MCF 10A (cell line): ENCODE measurements at regions of chr15 and their contacts with region 1.

Region 1: GRCh38 chr15:32844118-32844711 is 126.4 kb downstream of the GREM1 start:
- DNase-seq: peak; percentile 50
- H3K4me3 Mint-ChIP-seq: no peak overlapping the region
- H3K27ac Mint-ChIP-seq: no peak overlapping the region
- H3K4me1 Mint-ChIP-seq: no peaks in the 10 kb centered on the region
- H3K27me3 Mint-ChIP-seq: no peaks in the 10 kb centered on the region
- CTCF ChIP-seq: peak; percentile 61

Region 2: GRCh38 chr15:32664796-32665195 is 179.4 kb before region 1 on chr15:
- CTCF ChIA-PET with region 1: interaction called, 63 read pairs
- POLR2A ChIA-PET with region 1: no interaction called
- intact Hi-C with region 1: loop called (anchors 2 kb)
- DNase-seq: no peak
- H3K4me3 Mint-ChIP-seq: no peak overlapping the region
- H3K27ac Mint-ChIP-seq: no peak overlapping the region
- H3K4me1 Mint-ChIP-seq: peaks cover 9% of the 10 kb centered on the region
- H3K27me3 Mint-ChIP-seq: no peaks in the 10 kb centered on the region
- CTCF ChIP-seq: no peak

Region 3: GRCh38 chr15:32855942-32856341 is 11.7 kb after region 1 on chr15:
- CTCF ChIA-PET with region 1: interaction called, 15 read pairs
- POLR2A ChIA-PET with region 1: no interaction called
- intact Hi-C with region 1: no loop called
- DNase-seq: peak; percentile 86
- H3K4me3 Mint-ChIP-seq: no peak overlapping the region
- H3K27ac Mint-ChIP-seq: no peak overlapping the region
- H3K4me1 Mint-ChIP-seq: peaks cover 27% of the 10 kb centered on the region
- H3K27me3 Mint-ChIP-seq: no peaks in the 10 kb centered on the region
- CTCF ChIP-seq: no peak

Region 4: GRCh38 chr15:32899126-32899596 is 54.9 kb after region 1 on chr15:
- CTCF ChIA-PET with region 1: no interaction called
- POLR2A ChIA-PET with region 1: no interaction called
- intact Hi-C with region 1: no loop called
- DNase-seq: peak; percentile 3
- H3K4me3 Mint-ChIP-seq: no peak overlapping the region
- H3K27ac Mint-ChIP-seq: no peak overlapping the region
- H3K4me1 Mint-ChIP-seq: no peaks in the 10 kb centered on the region
- H3K27me3 Mint-ChIP-seq: no peaks in the 10 kb centered on the region
- CTCF ChIP-seq: no peak

Region 5: GRCh38 chr15:32936283-32936918 is 92.2 kb after region 1 on chr15:
- CTCF ChIA-PET with region 1: interaction called, 74 read pairs
- POLR2A ChIA-PET with region 1: interaction called, 4 read pairs
- intact Hi-C with region 1: loop called (anchors 1 kb)
- DNase-seq: peak; percentile 48
- H3K4me3 Mint-ChIP-seq: no peak overlapping the region
- H3K27ac Mint-ChIP-seq: peak overlapping the region; percentile 7
- H3K4me1 Mint-ChIP-seq: peaks cover 5% of the 10 kb centered on the region
- H3K27me3 Mint-ChIP-seq: peaks cover 11% of the 10 kb centered on the region
- CTCF ChIP-seq: peak; percentile 73

Region 6: GRCh38 chr15:32994810-32995424 is 150.7 kb after region 1 on chr15:
- CTCF ChIA-PET with region 1: interaction called, 20 read pairs
- POLR2A ChIA-PET with region 1: no interaction called
- intact Hi-C with region 1: loop called (anchors 1 kb)
- DNase-seq: peak; percentile 52
- H3K4me3 Mint-ChIP-seq: no peak overlapping the region
- H3K27ac Mint-ChIP-seq: no peak overlapping the region
- H3K4me1 Mint-ChIP-seq: no peaks in the 10 kb centered on the region
- H3K27me3 Mint-ChIP-seq: no peaks in the 10 kb centered on the region
- CTCF ChIP-seq: peak; percentile 47

Region 7: GRCh38 chr15:33188641-33189257 is 344.5 kb after region 1 on chr15:
- CTCF ChIA-PET with region 1: no interaction called
- POLR2A ChIA-PET with region 1: no interaction called
- intact Hi-C with region 1: no loop called
- DNase-seq: no peak
- H3K4me3 Mint-ChIP-seq: no peak overlapping the region
- H3K27ac Mint-ChIP-seq: no peak overlapping the region
- H3K4me1 Mint-ChIP-seq: no peaks in the 10 kb centered on the region
- H3K27me3 Mint-ChIP-seq: peaks cover 17% of the 10 kb centered on the region
- CTCF ChIP-seq: no peak

Region 8: GRCh38 chr15:33675246-33675645 is 831.0 kb after region 1 on chr15:
- CTCF ChIA-PET with region 1: no interaction called
- POLR2A ChIA-PET with region 1: no interaction called
- intact Hi-C with region 1: no loop called
- DNase-seq: peak; percentile 54
- H3K4me3 Mint-ChIP-seq: no peak overlapping the region
- H3K27ac Mint-ChIP-seq: no peak overlapping the region
- H3K4me1 Mint-ChIP-seq: no peaks in the 10 kb centered on the region
- H3K27me3 Mint-ChIP-seq: peaks cover 77% of the 10 kb centered on the region
- CTCF ChIP-seq: peak; percentile 60